ENCODE measurements at regions of chr19 and their contacts with region 1.

Region 1: DNA sequence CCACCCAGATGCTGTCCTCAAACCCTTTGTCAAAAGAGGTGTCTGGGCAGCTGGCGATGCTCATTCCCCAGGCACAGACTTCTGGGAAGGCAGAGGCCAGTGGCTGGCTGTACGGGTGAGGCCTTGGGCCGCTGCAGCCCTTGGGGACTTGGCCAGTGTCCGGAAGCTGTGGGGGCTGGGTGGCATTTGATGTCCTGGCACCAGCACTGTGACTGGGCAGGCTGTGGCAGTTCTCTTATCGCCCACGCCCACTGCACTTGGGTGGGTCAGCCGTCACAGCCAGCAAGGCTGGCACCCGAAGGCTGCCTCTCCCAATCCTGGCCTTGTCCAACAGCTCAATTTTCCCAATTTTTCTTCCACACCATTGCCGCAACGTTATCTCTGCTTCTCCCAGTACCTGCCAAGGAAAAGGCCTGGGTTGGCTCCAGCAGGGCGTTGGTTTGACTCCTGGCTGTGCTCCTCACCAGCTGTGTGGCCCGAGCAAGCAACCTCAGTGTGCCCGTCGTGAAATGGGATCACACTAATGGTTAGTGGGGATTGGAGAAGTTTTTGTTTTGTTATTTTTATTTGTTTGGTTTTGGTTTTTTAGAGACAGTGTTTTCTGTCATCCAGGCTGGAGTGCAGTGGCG is 12.7 kb upstream of the SLC44A2 start:
- DNase-seq: no peak
- ATAC-seq: no peak; the same call in 1 of the 2 replicates
- H3K4me3 ChIP-seq: no peak overlapping the region
- H3K27ac ChIP-seq: no peak overlapping the region
- H3K4me1 ChIP-seq: no peaks in the 10 kb centered on the region
- H3K27me3 ChIP-seq: no peaks in the 10 kb centered on the region
- CTCF ChIP-seq: no peak

Region 2: GRCh38 chr19:10491472-10492047 is 121.0 kb before region 1 on chr19:
- CTCF ChIA-PET with region 1: interaction called, 10 read pairs
- POLR2A ChIA-PET with region 1: no interaction called
- in situ Hi-C with region 1: no loop called
- intact Hi-C with region 1: no loop called
- DNase-seq: no peak
- ATAC-seq: no peak; the same call in 1 of the 2 replicates
- H3K4me3 ChIP-seq: no peak overlapping the region
- H3K27ac ChIP-seq: no peak overlapping the region
- H3K4me1 ChIP-seq: no peaks in the 10 kb centered on the region
- H3K27me3 ChIP-seq: no peaks in the 10 kb centered on the region
- CTCF ChIP-seq: no peak

Region 3: GRCh38 chr19:10717356-10718204 is 105.0 kb after region 1 on chr19 and contains the start of gene DNM2:
- CTCF ChIA-PET with region 1: no interaction called
- POLR2A ChIA-PET with region 1: no interaction called
- in situ Hi-C with region 1: no loop called
- intact Hi-C with region 1: no loop called
- DNase-seq: peak; percentile 99
- ATAC-seq: peak; percentile 94
- H3K4me3 ChIP-seq: peak within 1 kb of the TSS; percentile 76 to 78
- H3K27ac ChIP-seq: peak within 1 kb of the TSS; percentile 80
- H3K4me1 ChIP-seq: peaks cover 3% of the 10 kb centered on the region; the same call in 1 of the 2 replicates
- H3K27me3 ChIP-seq: no peaks in the 10 kb centered on the region
- CTCF ChIP-seq: peak; percentile 82; the same call in 1 of the 2 replicates
- total RNA-seq, gene DNM2: 125 TPM